ENCODE measurements at regions of chr6 and their contacts with region 1.

Region 1: GRCh38 chr6:164266851-164267250 is 852.3 kb downstream of the QKI start:
- DNase-seq: no peak
- H3K4me3 ChIP-seq: no peak overlapping the region
- H3K27ac ChIP-seq: no peak overlapping the region
- H3K4me1 ChIP-seq: no peaks in the 10 kb centered on the region
- H3K27me3 ChIP-seq: no peaks in the 10 kb centered on the region
- CTCF ChIP-seq: no peak
- POLR2A ChIP-seq: no peak

Region 2: DNA sequence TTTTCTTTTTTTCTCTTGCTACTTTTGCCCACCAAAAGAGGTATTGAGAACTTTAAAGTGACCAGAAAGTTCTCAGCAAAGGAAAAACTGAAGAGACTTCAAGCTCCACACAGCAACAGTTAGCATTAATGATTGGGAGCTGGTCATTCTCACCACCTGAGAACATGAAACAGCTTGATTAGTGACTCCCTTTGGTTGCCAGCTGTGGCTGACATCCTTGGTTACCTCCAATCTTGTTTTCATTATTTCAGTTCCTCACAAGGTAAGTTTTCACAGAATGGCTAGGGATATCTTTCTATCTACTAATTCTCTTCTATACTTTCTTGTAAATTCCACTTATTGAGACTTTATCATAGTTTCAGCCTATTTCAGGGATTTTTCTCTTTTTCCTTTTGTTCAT is 424.4 kb before region 1 on chr6:
- intact Hi-C with region 1: loop called (anchors 5 kb)
- DNase-seq: no peak
- H3K4me3 ChIP-seq: no peak overlapping the region
- H3K27ac ChIP-seq: no peak overlapping the region
- H3K4me1 ChIP-seq: no peaks in the 10 kb centered on the region
- H3K27me3 ChIP-seq: no peaks in the 10 kb centered on the region
- CTCF ChIP-seq: no peak
- POLR2A ChIP-seq: no peak

Region 3: GRCh38 chr6:164208371-164208770 is 58.5 kb before region 1 on chr6:
- intact Hi-C with region 1: loop called (anchors 2 kb)
- DNase-seq: no peak
- H3K4me3 ChIP-seq: no peak overlapping the region
- H3K27ac ChIP-seq: no peak overlapping the region
- H3K4me1 ChIP-seq: no peaks in the 10 kb centered on the region
- H3K27me3 ChIP-seq: no peaks in the 10 kb centered on the region
- CTCF ChIP-seq: no peak
- POLR2A ChIP-seq: no peak

Region 4: GRCh38 chr6:164230259-164230658 is 36.6 kb before region 1 on chr6:
- intact Hi-C with region 1: no loop called
- DNase-seq: no peak
- H3K4me3 ChIP-seq: no peak overlapping the region
- H3K27ac ChIP-seq: no peak overlapping the region
- H3K4me1 ChIP-seq: no peaks in the 10 kb centered on the region
- H3K27me3 ChIP-seq: no peaks in the 10 kb centered on the region
- CTCF ChIP-seq: no peak
- POLR2A ChIP-seq: no peak